ENCODE measurements at regions of chr19 and their contacts with region 1.

Region 1: DNA sequence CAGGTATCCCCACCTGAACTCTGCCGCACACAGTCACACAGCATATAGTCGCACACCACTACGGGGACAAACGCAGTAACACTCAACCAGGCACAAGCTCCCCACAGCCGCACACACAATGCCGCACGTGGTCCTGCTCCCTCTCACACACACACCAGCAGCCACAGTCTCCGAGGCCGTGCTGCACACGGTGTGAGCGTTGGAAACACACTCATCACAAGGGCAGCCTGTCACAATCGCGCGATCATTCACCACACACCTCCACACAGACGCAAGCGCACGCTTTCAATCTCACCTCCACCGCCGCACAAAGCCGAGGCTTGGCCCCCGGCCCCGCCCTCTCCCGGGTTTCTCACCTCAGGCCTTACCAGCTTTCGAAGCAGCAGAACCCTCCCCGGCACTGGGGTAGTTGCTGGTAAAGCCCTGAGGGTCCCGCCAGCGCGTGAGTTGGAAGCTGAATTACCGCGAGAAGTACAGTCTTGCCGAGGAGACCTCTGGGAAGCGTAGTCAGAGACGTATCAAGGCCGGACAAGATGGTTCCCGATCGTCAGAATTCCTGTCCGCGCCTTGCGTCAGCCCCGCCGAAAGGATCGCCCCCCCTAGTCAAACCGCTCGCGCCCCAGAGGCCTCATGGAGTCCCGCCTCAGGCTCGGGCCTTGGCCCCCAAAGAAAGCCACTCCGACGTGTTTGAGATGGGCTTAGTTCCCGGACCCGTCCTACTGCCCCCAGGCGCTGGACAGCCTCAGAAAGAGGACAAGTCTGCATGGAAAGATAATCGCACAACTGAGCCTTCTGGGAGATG is at the start of gene ZNF566:
- DNase-seq: peak; percentile 98
- H3K4me3 ChIP-seq: peak within 1 kb of the TSS; percentile 77
- H3K27ac ChIP-seq: peak within 1 kb of the TSS; percentile 90
- H3K4me1 ChIP-seq: peaks cover 50% of the 10 kb centered on the region
- CTCF ChIP-seq: 0 out of 2 replicates have a peak, but pooled peaks have one; percentile 28
- total RNA-seq, gene ZNF566: 16.1 and 29.5 TPM in 2 replicates

Region 2: GRCh38 chr19:36132489-36132891 is 356.8 kb before region 1 on chr19:
- CTCF ChIA-PET with region 1: no interaction called
- POLR2A ChIA-PET with region 1: no interaction called
- intact Hi-C with region 1: loop called (anchors 10 kb)
- DNase-seq: no peak
- H3K4me3 ChIP-seq: no peak overlapping the region
- H3K27ac ChIP-seq: no peak overlapping the region
- H3K4me1 ChIP-seq: peaks cover 21% of the 10 kb centered on the region
- CTCF ChIP-seq: no peak

Region 3: DNA sequence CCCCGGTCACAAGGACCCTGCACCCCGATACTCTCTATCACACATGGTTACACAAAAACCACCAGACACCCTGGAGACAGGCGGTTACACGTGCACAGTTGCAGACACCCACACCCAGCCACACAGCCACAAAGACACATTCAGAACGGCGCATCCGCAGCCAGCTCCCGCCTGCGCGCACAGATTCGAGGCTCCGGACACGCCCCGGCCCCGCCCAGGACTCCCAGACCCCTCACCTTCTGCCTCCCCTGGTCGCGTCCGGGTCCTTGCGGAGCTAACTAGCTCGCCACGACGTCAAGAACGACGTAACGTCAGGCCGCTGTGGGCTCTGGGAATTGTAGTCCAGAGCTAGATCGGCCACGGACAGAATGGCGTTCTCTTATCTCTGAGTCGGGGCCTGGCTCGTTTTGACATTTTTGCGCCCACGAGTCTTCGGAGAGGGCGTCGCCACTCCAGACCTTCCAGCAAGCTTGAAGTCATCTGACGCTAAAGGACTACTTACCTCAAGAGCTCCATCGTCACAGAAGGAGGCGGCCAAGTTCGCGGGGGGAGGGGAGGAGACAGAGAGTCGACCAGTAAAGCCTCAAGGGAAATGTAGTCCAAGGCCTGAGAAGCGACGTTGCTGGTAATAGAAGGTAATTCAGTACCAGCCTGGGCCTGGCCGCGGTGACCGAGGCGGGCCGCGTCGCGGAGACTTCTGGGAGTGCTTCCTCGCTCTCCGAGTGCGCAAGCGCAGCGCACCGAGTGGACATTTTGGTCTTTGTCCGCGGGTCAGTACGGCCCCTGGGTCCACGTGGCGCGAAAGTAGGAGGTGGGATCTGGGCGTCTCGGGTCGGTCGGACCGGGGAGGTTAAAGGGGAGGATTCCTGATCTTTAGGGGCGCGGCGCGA is 274.7 kb before region 1 on chr19 and contains the starts of genes ZNF146 and ZNF565:
- CTCF ChIA-PET with region 1: no interaction called
- POLR2A ChIA-PET with region 1: no interaction called
- intact Hi-C with region 1: loop called (anchors 2 kb)
- DNase-seq: peak; percentile 100
- H3K4me3 ChIP-seq: peak within 1 kb of the TSS; percentile 76
- H3K27ac ChIP-seq: peak within 1 kb of the TSS; percentile 71
- H3K4me1 ChIP-seq: peaks cover 21% of the 10 kb centered on the region
- CTCF ChIP-seq: no peak
- total RNA-seq, gene ZNF146: 67.4 and 69.4 TPM in 2 replicates
- total RNA-seq, gene ZNF565: 2.1 and 2.8 TPM in 2 replicates

Region 4: GRCh38 chr19:36418287-36419001 is 70.9 kb before region 1 on chr19 and contains the start of gene ZFP82:
- CTCF ChIA-PET with region 1: no interaction called
- POLR2A ChIA-PET with region 1: interaction called, 4 read pairs
- intact Hi-C with region 1: loop called (anchors 2 kb)
- DNase-seq: peak; percentile 94
- H3K4me3 ChIP-seq: peak within 1 kb of the TSS; percentile 84
- H3K27ac ChIP-seq: peak within 1 kb of the TSS; percentile 67
- H3K4me1 ChIP-seq: peaks cover 16% of the 10 kb centered on the region
- CTCF ChIP-seq: no peak
- total RNA-seq, gene ZFP82: 13.5 and 14.5 TPM in 2 replicates

Region 5: DNA sequence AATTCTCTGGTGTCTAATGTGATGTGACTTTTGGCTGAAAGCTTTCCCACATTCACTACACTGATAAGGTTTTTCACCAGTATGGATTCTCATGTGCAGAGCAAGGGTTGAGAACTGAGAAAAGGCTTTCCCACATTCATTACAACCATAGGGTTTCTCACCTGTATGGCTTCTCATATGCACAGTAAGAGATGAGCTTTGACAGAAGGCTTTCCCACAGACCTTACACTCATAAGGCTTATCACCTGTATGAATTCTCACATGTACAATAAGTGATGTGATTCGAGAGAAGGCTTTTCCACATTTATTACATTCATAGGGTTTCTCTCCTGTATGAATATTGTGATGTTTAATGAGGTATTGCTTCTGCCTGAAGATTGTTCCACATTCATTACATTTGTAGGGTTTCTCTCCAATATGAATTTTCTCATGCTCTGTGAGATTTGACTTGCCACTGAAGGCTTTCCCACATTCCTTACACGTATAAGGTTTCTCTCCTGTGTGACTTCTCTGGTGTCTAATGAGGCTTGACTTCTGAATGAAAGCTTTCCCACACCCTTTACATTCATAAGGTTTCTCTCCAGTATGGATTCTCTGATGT is 24.8 kb after region 1 on chr19:
- CTCF ChIA-PET with region 1: no interaction called
- POLR2A ChIA-PET with region 1: no interaction called
- intact Hi-C with region 1: no loop called
- DNase-seq: no peak
- H3K4me3 ChIP-seq: no peak overlapping the region
- H3K27ac ChIP-seq: no peak overlapping the region
- H3K4me1 ChIP-seq: no peaks in the 10 kb centered on the region
- CTCF ChIP-seq: no peak

Region 6: DNA sequence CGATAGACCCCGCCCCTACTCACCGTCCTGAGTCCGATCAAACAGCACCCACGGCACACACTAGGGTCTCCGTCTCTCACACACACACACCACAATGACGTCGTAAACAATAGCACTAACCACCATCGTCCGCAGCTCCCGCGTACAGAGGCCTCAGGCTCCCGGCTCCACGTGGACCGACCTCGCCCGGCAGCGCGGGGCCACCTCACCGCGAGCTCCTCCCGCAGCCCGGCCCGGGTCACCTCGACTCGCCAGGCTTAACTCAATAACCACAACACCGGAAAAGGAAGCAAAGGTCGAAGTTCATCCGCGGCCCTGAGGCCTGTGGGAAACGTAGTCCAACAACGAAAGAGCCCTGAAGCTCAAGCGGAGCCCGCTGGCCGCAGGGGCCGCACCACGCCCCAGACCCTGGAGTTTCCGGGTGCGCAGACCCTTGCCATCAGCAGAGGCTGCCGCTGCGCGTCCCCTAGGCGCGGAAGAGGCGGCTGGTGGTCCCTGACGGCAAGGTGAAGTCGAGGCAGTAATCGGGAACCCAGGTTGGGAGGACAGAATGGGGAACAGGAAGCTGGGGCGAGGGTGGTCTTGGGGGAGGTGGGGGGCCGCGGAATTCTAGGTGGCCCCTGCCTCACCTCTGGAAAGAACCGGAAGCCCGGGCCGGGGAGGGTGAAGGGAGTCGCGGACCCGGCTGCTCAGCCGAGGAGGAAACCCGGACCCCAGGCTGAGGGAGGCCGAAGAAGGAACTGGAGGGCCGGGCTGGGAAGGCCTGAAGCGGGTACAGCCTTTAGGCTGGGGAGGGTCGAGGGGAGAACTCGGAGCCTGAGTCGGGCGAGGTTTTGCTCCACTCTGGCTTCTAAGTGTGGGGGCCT is 83.9 kb after region 1 on chr19 and contains the start of gene ZNF529:
- CTCF ChIA-PET with region 1: no interaction called
- POLR2A ChIA-PET with region 1: no interaction called
- intact Hi-C with region 1: loop called (anchors 5 kb)
- DNase-seq: peak; percentile 94
- H3K4me3 ChIP-seq: peak within 1 kb of the TSS; percentile 91
- H3K27ac ChIP-seq: peak within 1 kb of the TSS; percentile 35
- H3K4me1 ChIP-seq: peaks cover 19% of the 10 kb centered on the region
- CTCF ChIP-seq: 0 out of 2 replicates have a peak, but pooled peaks have one; percentile 14
- total RNA-seq, gene ZNF529: 9.0 and 11.6 TPM in 2 replicates